Right ventricle myocardium inferior (tissue), 1 donor: ENCODE measurements at regions of chr9 and their contacts with region 1.

Region 1: DNA sequence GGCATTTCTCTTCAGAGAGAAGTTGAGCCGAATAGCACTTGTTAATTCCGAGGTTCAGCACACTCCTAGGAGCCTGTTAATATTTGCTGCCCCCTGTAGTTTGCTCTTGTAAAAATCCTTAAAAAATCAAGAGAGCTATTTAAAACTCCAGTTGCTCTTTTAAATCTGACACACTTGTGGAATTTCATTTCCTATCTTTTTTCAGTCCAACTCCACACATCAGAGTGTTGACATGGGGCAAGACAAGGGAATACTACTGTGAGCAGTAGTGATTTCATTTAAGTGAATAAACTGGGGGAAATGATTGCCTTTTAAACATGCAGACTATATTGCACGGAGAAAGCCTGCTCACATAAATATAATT is 1096.3 kb upstream of the DMAC1 start:
- DNase-seq: no peak
- ATAC-seq: peak; percentile 78

Region 2: DNA sequence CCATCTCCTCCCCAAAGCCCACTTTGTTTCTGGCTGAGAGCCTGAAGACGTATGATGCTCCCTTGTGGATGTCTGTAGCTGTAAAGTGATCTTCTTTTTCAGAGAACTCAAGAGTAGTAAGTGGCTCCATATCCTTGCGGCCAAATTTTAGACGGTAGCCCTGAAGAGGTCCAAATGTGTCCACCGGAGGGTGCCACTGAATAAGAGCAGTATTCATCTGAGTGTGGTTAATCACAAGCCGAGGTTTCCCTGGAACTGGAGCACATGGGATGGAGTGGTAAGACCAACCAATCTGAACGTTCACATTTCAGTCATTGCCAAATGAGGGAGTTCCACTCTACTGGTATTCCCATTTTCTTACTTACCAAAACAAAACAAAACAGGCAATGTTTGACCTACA is 409.7 kb before region 1 on chr9:
- intact Hi-C with region 1: loop called (anchors 5 kb)
- DNase-seq: no peak
- ATAC-seq: peak; percentile 44

Region 3: GRCh38 chr9:8802242-8802641 is 93.6 kb before region 1 on chr9:
- intact Hi-C with region 1: no loop called
- DNase-seq: no peak
- ATAC-seq: no peak